Activated CD4-positive, alpha-beta memory T cell treated with anti-CD3 and anti-CD28 coated beads, Interleukin-2, amount 10 ng/mL, durations not matched to agents 7 days and 5 days (primary cell): ENCODE measurements at regions of chr12 and their contacts with region 1.

Region 1: DNA sequence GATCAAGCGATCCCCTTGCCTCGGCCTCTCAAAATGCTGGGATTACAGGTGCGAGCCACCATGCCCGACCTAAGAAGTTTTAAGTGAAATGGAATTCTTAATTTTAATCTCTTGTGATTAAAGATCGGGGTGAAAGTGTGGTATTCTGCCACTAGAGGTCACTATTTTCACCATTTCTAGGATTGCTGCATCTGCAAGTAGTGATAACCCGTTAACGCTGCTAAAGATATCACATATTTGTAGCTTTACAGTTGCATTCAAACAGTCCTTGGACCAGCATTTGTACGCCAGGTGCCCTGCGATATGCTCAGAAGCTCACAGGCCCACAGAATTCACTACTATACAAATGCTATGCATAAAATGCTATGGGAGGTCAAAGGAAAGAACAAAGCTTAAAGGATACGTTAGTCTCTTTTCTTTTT is 19.3 kb downstream of the CCDC62 start:
- DNase-seq: no peak
- H3K4me3 Mint-ChIP-seq: no peak overlapping the region
- H3K27ac Mint-ChIP-seq: no peak overlapping the region
- H3K4me1 Mint-ChIP-seq: no peaks in the 10 kb centered on the region
- H3K27me3 Mint-ChIP-seq: no peaks in the 10 kb centered on the region

Region 2: GRCh38 chr12:122730215-122731014 is 63.3 kb before region 1 on chr12 and contains the start of gene HCAR1:
- CTCF ChIA-PET with region 1: no interaction called
- POLR2A ChIA-PET with region 1: no interaction called
- DNase-seq: peak; percentile 82
- H3K4me3 Mint-ChIP-seq: peak within 1 kb of the TSS; percentile 42
- H3K27ac Mint-ChIP-seq: peak within 1 kb of the TSS; percentile 37
- H3K4me1 Mint-ChIP-seq: peaks cover 78% of the 10 kb centered on the region
- H3K27me3 Mint-ChIP-seq: no peaks in the 10 kb centered on the region
- total RNA-seq, gene HCAR1: 0.28 to 0.30 TPM

Region 3: DNA sequence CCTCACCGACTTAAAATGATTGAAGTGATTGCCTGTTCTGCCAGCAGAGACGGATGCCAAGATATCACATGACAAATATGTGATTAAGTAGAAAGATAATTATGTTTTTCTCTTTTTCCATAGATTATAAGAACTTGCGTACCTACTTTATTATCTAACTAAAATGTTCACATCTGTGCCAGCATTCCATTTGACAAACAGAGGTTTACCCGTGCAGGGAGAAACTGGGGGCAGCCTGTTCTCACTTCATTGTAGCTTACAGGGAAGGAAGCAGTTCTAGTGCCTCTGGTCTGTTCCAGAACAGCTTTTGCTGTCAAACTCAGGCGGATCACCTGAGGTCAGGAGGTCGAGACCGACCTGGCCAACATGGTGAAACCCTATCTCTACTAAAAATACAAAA is 10.2 kb after region 1 on chr12:
- CTCF ChIA-PET with region 1: interaction called, 14 read pairs
- POLR2A ChIA-PET with region 1: no interaction called
- DNase-seq: no peak
- H3K4me3 Mint-ChIP-seq: no peak overlapping the region
- H3K27ac Mint-ChIP-seq: no peak overlapping the region
- H3K4me1 Mint-ChIP-seq: no peaks in the 10 kb centered on the region
- H3K27me3 Mint-ChIP-seq: no peaks in the 10 kb centered on the region

Region 4: DNA sequence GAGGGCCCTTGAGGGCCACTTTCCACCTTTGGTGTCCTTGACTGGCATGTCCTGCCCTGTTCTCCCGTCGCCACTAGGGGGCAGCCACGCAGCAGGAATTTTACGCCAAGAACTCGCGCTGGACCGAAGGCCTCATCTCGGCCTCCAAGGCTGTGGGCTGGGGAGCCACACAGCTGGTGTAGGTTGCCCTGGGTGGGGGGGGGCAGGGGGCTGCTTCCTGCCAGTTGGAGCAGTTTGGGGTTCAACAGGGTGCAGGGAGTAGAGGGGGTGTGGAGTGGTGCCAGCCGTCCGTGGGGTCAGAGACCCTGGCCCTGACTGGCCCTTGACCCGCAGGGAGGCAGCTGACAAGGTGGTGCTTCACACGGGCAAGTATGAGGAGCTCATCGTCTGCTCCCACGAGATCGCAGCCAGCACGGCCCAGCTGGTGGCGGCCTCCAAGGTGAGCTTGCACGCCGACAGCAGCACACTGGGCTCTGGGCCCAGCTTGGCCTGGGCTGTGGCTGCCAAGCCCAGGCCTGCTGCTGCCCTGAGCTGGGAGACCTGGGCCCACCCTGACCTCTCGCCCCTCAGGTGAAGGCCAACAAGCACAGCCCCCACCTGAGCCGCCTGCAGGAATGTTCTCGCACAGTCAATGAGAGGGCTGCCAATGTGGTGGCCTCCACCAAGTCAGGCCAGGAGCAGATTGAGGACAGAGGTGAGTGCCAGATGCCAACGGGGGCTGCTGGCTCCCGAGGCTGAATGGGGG is 66.8 kb after region 1 on chr12:
- CTCF ChIA-PET with region 1: interaction called, 13 read pairs
- POLR2A ChIA-PET with region 1: no interaction called
- DNase-seq: peak; percentile 84
- H3K4me3 Mint-ChIP-seq: no peak overlapping the region
- H3K27ac Mint-ChIP-seq: no peak overlapping the region
- H3K4me1 Mint-ChIP-seq: no peaks in the 10 kb centered on the region
- H3K27me3 Mint-ChIP-seq: no peaks in the 10 kb centered on the region

Region 5: DNA sequence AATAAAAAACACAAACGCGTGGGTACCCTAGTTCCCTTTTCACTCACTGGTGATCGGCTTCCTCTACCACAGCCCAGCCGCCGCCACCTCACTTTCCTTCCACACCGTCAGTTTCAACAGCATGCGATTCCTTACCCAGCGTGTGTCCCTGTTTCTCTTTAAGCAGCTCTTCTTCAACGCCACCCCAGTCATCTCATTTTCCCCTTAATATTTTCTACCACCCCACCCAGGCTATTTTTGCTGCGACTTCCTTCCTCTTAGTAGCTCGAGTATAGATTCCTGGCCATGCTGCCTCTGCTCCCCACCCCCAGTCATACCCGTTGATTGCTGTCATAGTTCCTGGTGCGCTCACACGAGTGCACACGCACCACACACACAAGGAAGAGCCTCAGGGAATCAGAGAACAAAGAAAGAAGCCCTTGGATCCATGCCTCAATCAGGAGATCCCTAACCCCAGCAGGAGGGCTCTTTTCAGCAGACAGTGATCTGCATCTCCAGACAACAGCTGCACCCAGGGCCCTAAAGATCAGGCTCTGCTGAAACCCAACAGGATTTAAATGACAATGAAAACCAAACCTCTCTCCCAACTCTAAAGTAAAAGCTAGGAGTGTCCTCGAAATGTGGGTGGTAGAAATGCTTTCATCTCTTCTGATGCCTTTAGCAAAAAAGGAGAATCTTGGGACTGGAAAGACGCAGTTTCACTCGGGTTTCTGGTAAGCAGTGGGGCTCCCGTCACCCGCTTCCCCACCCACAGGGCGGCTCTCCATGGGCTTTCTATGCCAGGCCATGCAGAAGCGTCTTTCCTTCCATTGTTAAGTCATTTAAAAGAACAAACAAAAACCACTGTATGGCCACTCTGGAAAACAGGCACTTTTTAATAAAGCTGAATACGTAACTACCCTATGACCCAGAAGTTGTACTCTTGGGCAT is 78.4 kb after region 1 on chr12:
- CTCF ChIA-PET with region 1: interaction called, 12 read pairs
- POLR2A ChIA-PET with region 1: no interaction called
- DNase-seq: peak; percentile 64
- H3K4me3 Mint-ChIP-seq: peak overlapping the region; percentile 69
- H3K27ac Mint-ChIP-seq: peak overlapping the region; percentile 72
- H3K4me1 Mint-ChIP-seq: peaks cover 59% of the 10 kb centered on the region
- H3K27me3 Mint-ChIP-seq: peaks cover 1% of the 10 kb centered on the region

Region 6: DNA sequence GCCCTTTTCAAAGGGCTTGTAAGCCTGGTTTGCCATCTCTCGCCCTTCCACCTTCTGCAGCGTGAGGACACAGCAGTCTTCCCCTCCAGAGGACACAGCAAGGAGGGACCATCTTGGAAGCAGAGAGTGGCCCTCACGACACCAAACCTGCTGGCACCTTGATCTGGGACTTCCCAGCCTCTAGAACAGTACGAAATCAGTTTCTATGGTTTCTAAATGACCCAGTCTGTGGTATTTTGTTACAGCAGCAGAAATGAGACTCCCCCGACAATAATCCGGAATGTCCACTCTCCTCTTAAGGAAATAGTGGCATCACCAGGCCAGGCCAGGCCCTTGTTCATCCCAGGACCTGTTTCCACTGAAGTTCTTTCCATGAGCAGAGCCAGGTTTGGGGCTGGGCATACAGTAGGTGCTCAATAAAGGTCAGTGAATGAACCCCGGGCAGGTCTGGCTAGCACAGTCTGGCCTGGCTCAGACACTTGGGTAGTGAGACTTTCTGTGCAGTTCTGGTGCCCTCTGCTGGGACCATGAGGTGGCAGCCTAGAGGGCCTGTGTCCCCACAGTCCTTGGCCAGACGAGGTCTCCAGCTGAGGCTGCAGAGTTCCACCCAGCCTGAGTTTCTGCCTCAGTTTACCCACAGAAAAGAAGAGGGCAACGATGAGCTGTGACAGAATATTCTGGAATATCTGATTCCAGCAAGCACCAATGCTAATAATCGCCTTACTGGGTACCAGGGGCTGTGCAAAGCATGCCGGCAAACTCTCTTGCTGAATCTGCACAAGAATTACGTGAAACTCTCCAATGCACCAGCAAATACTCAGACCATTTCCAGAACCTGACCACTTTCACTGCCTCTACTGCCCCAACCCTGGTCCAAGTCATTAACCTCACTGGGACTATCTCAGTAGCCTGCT is 158.5 kb after region 1 on chr12:
- CTCF ChIA-PET with region 1: interaction called, 47 read pairs
- POLR2A ChIA-PET with region 1: interaction called, 3 read pairs
- DNase-seq: peak; percentile 81
- H3K4me3 Mint-ChIP-seq: no peak overlapping the region
- H3K27ac Mint-ChIP-seq: no peak overlapping the region
- H3K4me1 Mint-ChIP-seq: peaks cover 13% of the 10 kb centered on the region
- H3K27me3 Mint-ChIP-seq: no peaks in the 10 kb centered on the region